Ovary (tissue), 10 donors: ENCODE measurements at regions of chr18 and their contacts with region 1.

Region 1: GRCh38 chr18:24878289-24878688 is 417.9 kb downstream of the HRH4 start:
- DNase-seq: no peak
- H3K4me3 ChIP-seq: no peak overlapping the region
- H3K27ac ChIP-seq: no peak overlapping the region
- H3K4me1 ChIP-seq: peaks cover 1% of the 10 kb centered on the region
- H3K27me3 ChIP-seq: no peaks in the 10 kb centered on the region
- CTCF ChIP-seq: peak; percentile 39 to 72 (median 64)
- EP300 ChIP-seq: no peak
- POLR2A ChIP-seq: no peak

Region 2: DNA sequence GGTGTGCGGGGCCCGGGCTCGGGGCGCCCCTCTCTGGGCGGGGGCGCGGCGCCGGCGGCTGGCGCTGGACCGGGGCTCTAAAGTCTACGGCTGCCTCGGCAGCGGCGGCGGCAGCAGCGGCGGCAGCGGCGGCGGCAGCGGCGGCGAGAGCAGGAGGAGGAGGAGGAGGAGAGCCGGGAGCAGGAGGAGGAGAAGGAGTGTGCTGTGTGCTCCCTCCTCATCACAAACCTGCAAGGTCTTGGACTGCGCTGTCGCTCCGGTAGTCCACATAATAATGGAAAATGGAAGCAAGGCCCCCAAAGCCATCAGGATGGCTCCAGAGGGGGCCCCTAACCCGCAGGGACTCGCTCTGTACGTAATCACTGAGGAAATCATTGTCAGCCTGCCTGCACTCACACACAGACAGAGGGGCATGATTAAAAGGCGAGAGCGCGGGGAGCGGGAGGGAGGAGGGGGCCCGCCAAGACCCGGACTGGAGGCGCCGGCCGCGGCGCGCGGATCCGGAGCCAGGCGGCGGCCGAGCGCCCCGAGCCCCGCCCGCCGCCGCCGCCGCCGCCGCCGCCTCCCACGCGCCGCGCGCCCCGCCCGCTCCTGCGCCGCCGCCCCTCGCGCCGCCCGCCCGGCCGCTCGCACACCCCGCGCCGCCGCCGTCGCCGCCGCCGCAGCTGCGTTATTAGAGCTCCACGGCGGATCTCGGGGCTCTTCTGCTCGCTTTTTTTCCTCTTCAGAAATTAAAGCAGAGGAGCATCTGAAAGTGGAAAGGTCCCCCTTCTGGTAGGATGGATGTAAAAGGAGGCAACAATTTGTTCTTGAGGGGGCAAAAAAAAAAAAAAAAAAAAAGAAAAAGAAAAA is 473.7 kb after region 1 on chr18 and contains the start of gene ZNF521:
- intact Hi-C with region 1: loop called in 2 of 4 experiments (anchors 10 kb)
- DNase-seq: peak; percentile 85 to 89 (median 87)
- H3K4me3 ChIP-seq: peak within 1 kb of the TSS; percentile 78
- H3K27ac ChIP-seq: peak within 1 kb of the TSS; percentile 98
- H3K4me1 ChIP-seq: no peaks in the 10 kb centered on the region
- H3K27me3 ChIP-seq: no peaks in the 10 kb centered on the region
- CTCF ChIP-seq: peak in 1 of 3 donors; percentile 22
- EP300 ChIP-seq: no peak
- POLR2A ChIP-seq: peak; percentile 56
- total RNA-seq, gene ZNF521: 38.7 to 51.3 (median 44.5) TPM

Region 3: DNA sequence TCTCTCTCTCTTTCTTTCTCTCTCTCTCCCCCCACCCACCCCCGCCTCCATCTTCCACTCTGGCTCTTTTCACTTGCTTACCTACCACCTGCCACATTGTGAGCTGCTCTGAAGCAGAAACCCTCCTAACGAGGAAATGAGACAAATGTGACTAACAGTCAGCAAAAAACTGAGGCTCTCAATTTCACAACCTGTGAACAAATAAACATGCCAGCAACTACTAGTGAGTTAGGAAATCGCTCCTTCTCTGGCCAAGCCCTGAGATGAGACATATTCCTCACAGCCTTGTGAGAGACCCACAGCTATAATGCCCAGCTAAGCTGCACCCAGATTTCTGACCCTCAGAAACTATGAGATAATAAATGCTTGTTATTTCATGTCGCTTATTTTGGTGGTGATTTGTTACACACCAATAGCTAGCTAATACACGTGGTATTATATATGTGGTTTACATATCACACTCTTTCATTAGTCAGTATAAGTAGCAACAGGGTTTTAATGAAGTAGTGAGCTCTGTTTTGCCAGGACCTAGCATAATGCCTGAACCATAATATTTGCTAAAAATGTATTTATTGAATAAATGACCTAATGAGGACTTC is 482.1 kb after region 1 on chr18:
- intact Hi-C with region 1: loop called in 3 of 4 experiments (anchors 10 kb)
- DNase-seq: no peak
- H3K4me3 ChIP-seq: no peak overlapping the region
- H3K27ac ChIP-seq: no peak overlapping the region
- H3K4me1 ChIP-seq: no peaks in the 10 kb centered on the region
- H3K27me3 ChIP-seq: no peaks in the 10 kb centered on the region
- CTCF ChIP-seq: no peak
- EP300 ChIP-seq: no peak
- POLR2A ChIP-seq: no peak

Region 4: GRCh38 chr18:25896178-25896780 is 1018.0 kb after region 1 on chr18:
- intact Hi-C with region 1: loop called in 2 of 4 experiments (anchors 5 to 10 kb)
- DNase-seq: peak in 3 of 5 donors; percentile 11 to 52 (median 41)
- H3K4me3 ChIP-seq: no peak overlapping the region
- H3K27ac ChIP-seq: no peak overlapping the region
- H3K4me1 ChIP-seq: no peaks in the 10 kb centered on the region
- H3K27me3 ChIP-seq: no peaks in the 10 kb centered on the region
- CTCF ChIP-seq: peak; percentile 45 to 59 (median 49)
- EP300 ChIP-seq: no peak
- POLR2A ChIP-seq: no peak